A549 (cell line): ENCODE measurements at regions of chr1 and their contacts with region 1.

Region 1: GRCh38 chr1:39973503-39974135 is 18.7 kb downstream of the MFSD2A start:
- DNase-seq: peak; percentile 54 to 59
- ATAC-seq: peak; percentile 82 to 93
- H3K4me3 ChIP-seq: no peak overlapping the region
- H3K27ac ChIP-seq: no peak overlapping the region
- H3K4me1 ChIP-seq: peaks cover 5% of the 10 kb centered on the region; the same call in 1 of the 3 replicates
- CTCF ChIP-seq: peak; percentile 82
- EP300 ChIP-seq: no peak
- POLR2A ChIP-seq: no peak
- RAD21 ChIP-seq: peak; percentile 93

Region 2: GRCh38 chr1:39799770-39800470 is 173.7 kb before region 1 on chr1:
- CTCF ChIA-PET with region 1: interaction called, 10 read pairs
- POLR2A ChIA-PET with region 1: no interaction called
- DNase-seq: peak; percentile 65 to 69
- ATAC-seq: peak; percentile 92 to 95
- H3K4me3 ChIP-seq: peak overlapping the region; percentile 16; the same call in 1 of the 3 replicates
- H3K27ac ChIP-seq: peak overlapping the region; percentile 60 to 69; a peak in 4 of 6 replicates
- H3K4me1 ChIP-seq: peaks cover 12% of the 10 kb centered on the region; the same call in 2 of the 3 replicates
- CTCF ChIP-seq: peak; percentile 59
- EP300 ChIP-seq: no peak
- POLR2A ChIP-seq: no peak
- RAD21 ChIP-seq: peak; percentile 55

Region 3: GRCh38 chr1:39901698-39902459 is 71.7 kb before region 1 on chr1 and contains the start of gene MYCL:
- CTCF ChIA-PET with region 1: interaction called, 19 read pairs
- POLR2A ChIA-PET with region 1: no interaction called
- DNase-seq: peak; percentile 72 to 80
- ATAC-seq: peak; percentile 80 to 83
- H3K4me3 ChIP-seq: peak within 1 kb of the TSS; percentile 60
- H3K27ac ChIP-seq: peak within 1 kb of the TSS; percentile 71 to 83
- H3K4me1 ChIP-seq: peaks cover 10% of the 10 kb centered on the region; the same call in 2 of the 3 replicates
- CTCF ChIP-seq: peak; percentile 58
- EP300 ChIP-seq: no peak
- POLR2A ChIP-seq: peak; percentile 54
- RAD21 ChIP-seq: peak; percentile 40 to 68
- polyA plus RNA-seq, gene MYCL: 1.3 and 1.5 TPM in 2 replicates

Region 4: GRCh38 chr1:39926343-39926793 is 47.3 kb before region 1 on chr1:
- CTCF ChIA-PET with region 1: interaction called, 151 read pairs
- POLR2A ChIA-PET with region 1: no interaction called
- DNase-seq: no peak
- ATAC-seq: no peak
- H3K4me3 ChIP-seq: no peak overlapping the region
- H3K27ac ChIP-seq: peak overlapping the region in 1 of 2 experiments; percentile 24; a peak in 1 of 6 replicates
- H3K4me1 ChIP-seq: no peaks in the 10 kb centered on the region; the same call in 2 of the 3 replicates
- CTCF ChIP-seq: no peak
- EP300 ChIP-seq: no peak
- POLR2A ChIP-seq: no peak
- RAD21 ChIP-seq: no peak

Region 5: DNA sequence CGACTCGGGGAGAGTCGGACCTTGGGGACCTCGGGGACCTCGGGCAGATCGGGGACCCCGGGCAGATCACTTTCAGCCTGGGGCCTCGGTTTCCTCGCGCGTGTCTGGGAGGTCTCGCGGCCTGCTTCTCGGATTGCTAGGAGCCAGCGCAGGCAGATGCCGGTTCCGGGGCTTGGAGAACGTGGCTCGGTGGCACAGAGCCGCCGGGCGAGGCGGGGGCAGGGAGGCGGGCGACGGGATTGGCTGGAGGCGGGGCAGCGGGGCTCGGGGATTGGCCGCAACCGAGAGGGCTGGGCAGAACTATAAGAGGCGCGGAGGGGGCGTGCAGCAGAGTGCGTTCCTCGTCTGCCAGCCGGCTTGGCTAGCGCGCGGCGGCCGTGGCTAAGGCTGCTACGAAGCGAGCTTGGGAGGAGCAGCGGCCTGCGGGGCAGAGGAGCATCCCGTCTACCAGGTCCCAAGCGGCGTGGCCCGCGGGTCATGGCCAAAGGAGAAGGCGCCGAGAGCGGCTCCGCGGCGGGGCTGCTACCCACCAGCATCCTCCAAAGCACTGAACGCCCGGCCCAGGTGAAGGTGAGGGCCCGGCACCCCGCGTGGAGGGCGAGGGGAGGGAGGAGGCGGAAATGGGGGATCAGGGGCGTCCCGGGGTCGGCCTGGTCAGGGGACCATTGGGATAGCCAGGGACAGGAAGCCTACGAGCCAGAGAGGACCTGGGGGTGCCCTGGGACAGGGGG is 18.6 kb before region 1 on chr1 and contains the start of gene MFSD2A:
- CTCF ChIA-PET with region 1: interaction called, 18 read pairs
- POLR2A ChIA-PET with region 1: no interaction called
- DNase-seq: peak; percentile 77 to 78
- ATAC-seq: peak; percentile 95 to 98
- H3K4me3 ChIP-seq: peak within 1 kb of the TSS; percentile 70
- H3K27ac ChIP-seq: peak within 1 kb of the TSS; percentile 60 to 87
- H3K4me1 ChIP-seq: peaks cover 11% of the 10 kb centered on the region; the same call in 2 of the 3 replicates
- CTCF ChIP-seq: no peak
- EP300 ChIP-seq: no peak
- POLR2A ChIP-seq: peak; percentile 73
- RAD21 ChIP-seq: no peak
- polyA plus RNA-seq, gene MFSD2A: 3.1 and 3.9 TPM in 2 replicates